CD14-positive monocyte (primary cell): ENCODE measurements at regions of chr15 and their contacts with region 1.

Region 1: DNA sequence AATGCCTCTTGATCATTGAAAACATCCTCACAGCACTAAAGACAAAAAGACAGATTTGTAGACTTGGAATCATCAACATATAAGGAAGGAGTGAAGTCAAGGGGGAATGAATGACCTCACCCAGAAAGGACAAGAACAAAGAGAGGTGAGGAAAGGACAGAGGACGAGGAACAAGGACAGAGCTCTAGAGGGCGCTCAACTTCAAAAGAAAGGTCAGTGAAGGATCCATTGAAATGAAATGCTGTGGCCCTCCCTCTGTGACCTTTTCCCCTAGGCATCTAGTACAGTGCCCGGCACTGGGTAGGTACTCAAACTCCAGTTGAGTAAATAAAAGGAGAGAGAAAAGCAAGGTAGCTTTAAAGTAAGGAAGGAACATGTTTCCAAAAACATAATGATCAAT is 2.6 kb downstream of the ATP8B4 start:
- DNase-seq: peak in 2 of 3 donors; percentile 73 to 78
- H3K4me3 ChIP-seq: no peak overlapping the region
- H3K4me3 Mint-ChIP-seq: no peak overlapping the region
- H3K27ac ChIP-seq: peak overlapping the region in 1 of 2 donors; percentile 93
- H3K27ac Mint-ChIP-seq: peak overlapping the region; percentile 60 to 98 (median 93)
- H3K4me1 ChIP-seq: peaks cover 66 to 72% of the 10 kb centered on the region in 2 donors
- H3K4me1 Mint-ChIP-seq: peaks cover 71% of the 10 kb centered on the region
- H3K27me3 ChIP-seq: no peaks in the 10 kb centered on the region
- H3K27me3 Mint-ChIP-seq: peaks cover 0 to 3% (median 0%) of the 10 kb centered on the region in 3 donors
- CTCF ChIP-seq: peak; percentile 73

Region 2: DNA sequence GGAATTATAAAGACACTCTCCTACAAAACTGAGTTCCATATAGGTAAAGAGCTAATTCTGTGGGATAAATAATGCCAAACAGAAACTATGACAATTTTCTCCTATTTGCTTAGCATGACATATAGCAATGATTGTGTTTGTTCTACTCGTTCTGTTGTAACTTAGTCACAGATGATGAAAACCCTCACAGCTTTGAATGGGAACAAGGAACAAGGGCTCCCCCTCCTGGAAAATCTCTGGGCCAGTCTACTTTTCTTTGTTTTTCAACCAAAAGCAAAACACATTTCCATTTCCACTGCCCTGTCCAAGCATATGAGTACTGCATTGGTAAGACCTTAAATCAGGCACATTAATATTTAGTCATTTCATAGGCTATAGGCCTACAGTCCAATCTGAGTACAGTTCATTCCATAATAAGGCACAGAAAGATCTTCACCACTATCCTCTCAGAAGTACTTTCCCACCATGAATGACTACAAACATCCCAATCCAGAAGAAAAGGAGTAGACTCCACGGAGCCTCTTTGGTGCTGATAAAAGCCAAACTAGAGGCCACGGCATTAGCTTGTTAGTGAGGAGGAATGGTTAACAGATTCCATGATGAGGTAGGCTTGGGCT is 64.6 kb before region 1 on chr15:
- intact Hi-C with region 1: loop called in 1 of 2 experiments (anchors 10 kb)
- DNase-seq: peak; percentile 79 to 86 (median 80)
- H3K4me3 ChIP-seq: peak overlapping the region in 1 of 3 experiments; percentile 11
- H3K4me3 Mint-ChIP-seq: no peak overlapping the region
- H3K27ac ChIP-seq: peak overlapping the region in 1 of 2 donors; percentile 87
- H3K27ac Mint-ChIP-seq: peak overlapping the region; percentile 87 to 98 (median 91)
- H3K4me1 ChIP-seq: peaks cover 53 to 55% of the 10 kb centered on the region in 2 donors
- H3K4me1 Mint-ChIP-seq: peaks cover 52% of the 10 kb centered on the region
- H3K27me3 ChIP-seq: no peaks in the 10 kb centered on the region
- H3K27me3 Mint-ChIP-seq: no peaks in the 10 kb centered on the region
- CTCF ChIP-seq: peak; percentile 75

Region 3: DNA sequence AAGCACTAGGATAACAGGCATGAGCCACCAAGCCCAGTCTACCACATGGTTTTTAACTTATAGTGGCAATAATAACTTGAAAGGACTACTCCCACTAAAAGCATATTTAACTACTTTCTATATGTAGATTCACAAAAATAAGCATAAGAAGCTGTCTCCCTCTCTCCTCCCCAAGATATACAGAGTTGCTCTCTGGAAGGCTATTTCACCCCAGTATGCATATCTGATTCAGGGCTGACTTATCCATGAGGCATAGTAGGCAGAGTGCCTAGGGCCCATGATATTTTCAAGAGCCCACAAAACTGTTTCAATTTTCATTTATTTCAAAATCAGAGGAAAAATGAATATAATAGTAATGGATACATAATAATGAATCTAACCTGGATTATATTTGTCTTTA is 17.9 kb before region 1 on chr15:
- intact Hi-C with region 1: loop called in 1 of 2 experiments (anchors 2 kb)
- DNase-seq: no peak
- H3K4me3 ChIP-seq: no peak overlapping the region
- H3K4me3 Mint-ChIP-seq: no peak overlapping the region
- H3K27ac ChIP-seq: peak overlapping the region in 1 of 2 donors; percentile 72
- H3K27ac Mint-ChIP-seq: peak overlapping the region in 6 of 7 donors; percentile 64 to 90 (median 78)
- H3K4me1 ChIP-seq: peaks cover 20 to 45% of the 10 kb centered on the region in 2 donors
- H3K4me1 Mint-ChIP-seq: peaks cover 60% of the 10 kb centered on the region
- H3K27me3 ChIP-seq: no peaks in the 10 kb centered on the region
- H3K27me3 Mint-ChIP-seq: no peaks in the 10 kb centered on the region
- CTCF ChIP-seq: no peak